CD8-positive, alpha-beta memory T cell (primary cell): ENCODE measurements at regions of chr9 and their contacts with region 1.

Region 1: DNA sequence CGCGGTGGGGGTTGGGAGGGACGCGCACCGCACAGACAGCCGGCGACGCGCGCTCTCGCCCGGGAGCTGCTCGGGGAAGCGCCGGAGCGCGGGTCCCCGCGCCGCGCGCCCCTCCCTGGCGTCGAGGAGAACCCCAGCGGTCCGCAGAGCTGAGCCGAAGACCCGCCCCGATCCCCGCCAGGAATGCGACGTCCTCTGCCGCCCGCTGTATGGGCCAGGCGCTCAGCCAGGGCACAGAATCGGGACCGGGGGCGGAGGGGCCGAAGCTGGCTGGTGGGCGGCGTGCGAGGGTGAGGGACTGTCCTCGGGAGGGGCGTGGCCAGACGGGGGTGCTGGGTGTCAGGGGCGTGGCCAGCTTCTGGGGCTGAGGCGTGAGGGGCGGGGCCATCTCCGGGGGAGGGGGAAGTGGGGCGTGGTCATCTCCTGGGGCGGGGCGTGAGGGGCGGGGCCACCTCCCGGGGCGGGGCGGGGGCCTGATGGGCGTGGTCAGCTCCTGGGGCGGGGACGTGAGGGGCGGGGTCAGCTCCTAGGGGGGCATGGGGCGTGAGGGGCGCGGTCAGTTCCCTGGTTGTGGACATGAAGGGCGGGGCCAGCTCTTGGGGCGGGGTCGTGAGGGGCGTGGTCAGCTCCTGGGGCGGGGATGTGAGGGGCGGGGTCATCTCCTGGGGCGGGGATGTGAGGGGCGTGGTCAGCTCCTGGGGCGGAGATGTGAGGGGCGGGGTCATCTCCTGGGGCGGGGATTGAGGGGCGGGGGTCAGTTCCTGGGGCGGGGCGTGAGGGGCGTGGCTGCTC is 965 bp downstream of the PTGDS start:
- DNase-seq: peak; percentile 68 to 85 (median 79)
- H3K4me3 ChIP-seq: no peak overlapping the region
- H3K4me3 Mint-ChIP-seq: peak overlapping the region in 4 of 7 donors; percentile 52 to 66 (median 61)
- H3K27ac ChIP-seq: no peak overlapping the region
- H3K27ac Mint-ChIP-seq: no peak overlapping the region
- H3K4me1 ChIP-seq: peaks cover 26% of the 10 kb centered on the region
- H3K4me1 Mint-ChIP-seq: peaks cover 21 to 47% (median 24%) of the 10 kb centered on the region in 3 donors
- H3K27me3 ChIP-seq: no peaks in the 10 kb centered on the region
- H3K27me3 Mint-ChIP-seq: peaks cover 0 to 5% of the 10 kb centered on the region in 2 donors

Region 2: DNA sequence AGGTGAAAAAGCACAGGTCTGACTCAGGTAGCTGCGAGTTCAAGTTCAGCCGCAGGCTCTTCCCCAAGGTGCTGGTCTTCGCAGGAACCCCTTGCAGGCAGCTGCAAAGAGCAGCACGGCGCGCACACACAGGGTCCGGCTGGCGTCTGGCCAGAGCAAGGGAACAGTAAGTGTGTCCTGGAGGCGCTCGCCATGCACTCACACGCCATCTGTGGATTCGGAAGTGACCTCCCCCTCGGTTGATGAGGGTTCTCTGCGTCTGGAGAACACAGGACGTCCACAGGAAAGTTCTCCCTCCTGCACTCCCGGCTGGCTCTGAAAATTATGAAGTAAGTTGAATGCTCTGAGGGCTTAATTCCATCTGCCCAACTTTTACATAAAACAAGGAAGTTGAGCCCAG is 329.5 kb before region 1 on chr9:
- CTCF ChIA-PET with region 1: no interaction called
- POLR2A ChIA-PET with region 1: no interaction called
- DNase-seq: no peak
- H3K4me3 ChIP-seq: no peak overlapping the region
- H3K4me3 Mint-ChIP-seq: no peak overlapping the region
- H3K27ac ChIP-seq: no peak overlapping the region
- H3K27ac Mint-ChIP-seq: no peak overlapping the region
- H3K4me1 ChIP-seq: peaks cover 8% of the 10 kb centered on the region
- H3K4me1 Mint-ChIP-seq: no peaks in the 10 kb centered on the region
- H3K27me3 ChIP-seq: peaks cover 18% of the 10 kb centered on the region
- H3K27me3 Mint-ChIP-seq: peaks cover 18 to 28% of the 10 kb centered on the region in 2 donors

Region 3: GRCh38 chr9:136949817-136950655 is 28.2 kb before region 1 on chr9:
- CTCF ChIA-PET with region 1: interaction called, 30 read pairs
- POLR2A ChIA-PET with region 1: interaction called, 3 read pairs
- DNase-seq: peak; percentile 93 to 98 (median 97)
- H3K4me3 ChIP-seq: peak overlapping the region; percentile 77
- H3K4me3 Mint-ChIP-seq: peak overlapping the region; percentile 81 to 92 (median 87)
- H3K27ac ChIP-seq: peak overlapping the region; percentile 78
- H3K27ac Mint-ChIP-seq: peak overlapping the region; percentile 80 to 94 (median 86)
- H3K4me1 ChIP-seq: peaks cover 14% of the 10 kb centered on the region
- H3K4me1 Mint-ChIP-seq: peaks cover 0 to 34% (median 7%) of the 10 kb centered on the region in 3 donors
- H3K27me3 ChIP-seq: no peaks in the 10 kb centered on the region
- H3K27me3 Mint-ChIP-seq: no peaks in the 10 kb centered on the region

Region 4: DNA sequence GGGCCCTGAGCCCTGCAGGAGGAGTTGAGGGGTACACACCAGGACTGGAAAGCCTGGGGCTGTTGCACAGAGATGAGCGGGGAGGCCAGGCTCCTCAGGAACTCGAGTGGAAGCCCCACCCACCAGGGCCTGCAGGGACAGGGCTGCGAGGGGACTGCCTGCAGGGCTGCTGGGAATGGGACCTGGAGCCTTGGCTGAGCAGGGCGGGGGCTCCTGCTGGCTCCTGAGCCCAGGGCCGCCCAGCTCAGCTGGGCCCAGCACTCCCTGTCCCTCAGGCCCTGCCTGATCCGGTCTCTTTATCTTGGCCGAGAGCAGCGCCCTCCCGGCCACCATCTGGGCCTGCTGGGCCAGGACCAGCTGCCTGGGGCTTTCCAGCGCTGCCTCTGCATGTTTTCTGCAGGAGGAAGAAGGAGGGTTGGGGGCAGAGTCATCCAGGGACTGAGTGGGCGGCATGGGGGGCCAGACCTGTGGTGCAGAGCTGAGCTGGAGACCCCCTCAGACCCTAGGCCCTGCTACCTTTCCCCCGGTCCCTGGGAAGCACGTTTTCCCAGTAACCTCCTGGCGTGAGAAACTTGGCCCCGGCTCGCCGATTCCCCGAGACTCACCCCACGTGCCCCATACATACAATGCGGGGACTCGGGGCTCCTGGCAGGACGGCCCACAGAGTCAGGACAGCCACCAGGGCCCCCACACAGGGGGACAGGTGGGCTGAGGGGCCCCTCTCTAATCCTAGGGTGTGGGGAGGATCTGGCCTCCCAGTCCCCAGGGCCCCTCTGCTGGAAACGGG is 16.8 kb before region 1 on chr9:
- CTCF ChIA-PET with region 1: interaction called, 13 read pairs
- POLR2A ChIA-PET with region 1: interaction called, 8 read pairs
- DNase-seq: no peak
- H3K4me3 ChIP-seq: no peak overlapping the region
- H3K4me3 Mint-ChIP-seq: peak overlapping the region in 3 of 7 donors; percentile 72 to 86 (median 78)
- H3K27ac ChIP-seq: no peak overlapping the region
- H3K27ac Mint-ChIP-seq: peak overlapping the region in 5 of 8 donors; percentile 29 to 93 (median 69)
- H3K4me1 ChIP-seq: peaks cover 52% of the 10 kb centered on the region
- H3K4me1 Mint-ChIP-seq: peaks cover 44 to 86% (median 48%) of the 10 kb centered on the region in 3 donors
- H3K27me3 ChIP-seq: no peaks in the 10 kb centered on the region
- H3K27me3 Mint-ChIP-seq: peaks cover 0 to 3% of the 10 kb centered on the region in 2 donors

Region 5: GRCh38 chr9:136991993-136992818 is 13.9 kb after region 1 on chr9 and contains the start of gene PAXX:
- CTCF ChIA-PET with region 1: interaction called, 21 read pairs
- POLR2A ChIA-PET with region 1: interaction called, 12 read pairs
- DNase-seq: peak; percentile 91 to 95 (median 92)
- H3K4me3 ChIP-seq: peak within 1 kb of the TSS; percentile 65
- H3K4me3 Mint-ChIP-seq: peak within 1 kb of the TSS; percentile 84 to 95 (median 87)
- H3K27ac ChIP-seq: peak within 1 kb of the TSS; percentile 83
- H3K27ac Mint-ChIP-seq: peak within 1 kb of the TSS; percentile 92 to 98 (median 96)
- H3K4me1 ChIP-seq: peaks cover 28% of the 10 kb centered on the region
- H3K4me1 Mint-ChIP-seq: peaks cover 19 to 50% (median 22%) of the 10 kb centered on the region in 3 donors
- H3K27me3 ChIP-seq: no peaks in the 10 kb centered on the region
- H3K27me3 Mint-ChIP-seq: peaks cover 2 to 3% of the 10 kb centered on the region in 2 donors
- total RNA-seq, gene PAXX: 78.4 to 82.2 TPM

Region 6: DNA sequence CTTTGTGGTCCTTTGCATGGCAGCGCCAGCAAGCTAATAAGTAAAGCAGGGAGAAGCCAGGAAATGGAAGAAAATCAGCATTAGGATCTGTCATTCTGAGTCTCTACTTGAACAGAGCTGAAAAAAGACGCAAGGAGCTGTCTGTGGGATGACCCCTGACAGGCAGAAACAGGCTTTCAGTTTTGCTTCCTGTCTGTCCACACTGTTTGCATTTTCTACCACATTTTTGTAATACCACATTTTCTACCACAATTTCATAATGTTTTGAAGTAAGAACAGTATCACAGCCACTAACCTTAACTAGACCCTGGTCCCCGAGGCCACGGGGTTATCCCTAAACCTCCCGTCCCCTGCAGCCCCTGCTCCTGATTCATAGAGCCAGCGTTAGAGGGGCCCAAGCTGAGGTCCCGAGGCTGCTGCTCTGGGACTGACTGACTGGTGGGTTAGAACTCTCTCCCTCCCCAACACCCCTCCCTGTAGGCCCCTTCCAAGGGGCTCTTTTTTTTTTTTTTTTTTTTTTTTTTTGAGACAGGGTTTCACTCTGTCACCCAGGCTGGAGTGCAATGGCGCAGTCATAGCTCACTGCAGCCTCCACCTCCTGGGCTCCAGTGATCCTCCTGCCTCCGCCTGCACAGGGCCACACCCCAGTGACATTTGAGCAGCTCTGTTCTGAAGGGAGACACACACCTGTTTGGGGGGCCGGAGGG is 22.1 kb after region 1 on chr9:
- CTCF ChIA-PET with region 1: interaction called, 8 read pairs
- POLR2A ChIA-PET with region 1: interaction called, 11 read pairs
- DNase-seq: peak in 2 of 5 donors; percentile 29 to 61
- H3K4me3 ChIP-seq: no peak overlapping the region
- H3K4me3 Mint-ChIP-seq: peak overlapping the region; percentile 62 to 93 (median 79)
- H3K27ac ChIP-seq: peak overlapping the region; percentile 43
- H3K27ac Mint-ChIP-seq: peak overlapping the region; percentile 84 to 96 (median 91)
- H3K4me1 ChIP-seq: peaks cover 46% of the 10 kb centered on the region
- H3K4me1 Mint-ChIP-seq: peaks cover 38 to 60% (median 40%) of the 10 kb centered on the region in 3 donors
- H3K27me3 ChIP-seq: no peaks in the 10 kb centered on the region
- H3K27me3 Mint-ChIP-seq: no peaks in the 10 kb centered on the region

Region 7: DNA sequence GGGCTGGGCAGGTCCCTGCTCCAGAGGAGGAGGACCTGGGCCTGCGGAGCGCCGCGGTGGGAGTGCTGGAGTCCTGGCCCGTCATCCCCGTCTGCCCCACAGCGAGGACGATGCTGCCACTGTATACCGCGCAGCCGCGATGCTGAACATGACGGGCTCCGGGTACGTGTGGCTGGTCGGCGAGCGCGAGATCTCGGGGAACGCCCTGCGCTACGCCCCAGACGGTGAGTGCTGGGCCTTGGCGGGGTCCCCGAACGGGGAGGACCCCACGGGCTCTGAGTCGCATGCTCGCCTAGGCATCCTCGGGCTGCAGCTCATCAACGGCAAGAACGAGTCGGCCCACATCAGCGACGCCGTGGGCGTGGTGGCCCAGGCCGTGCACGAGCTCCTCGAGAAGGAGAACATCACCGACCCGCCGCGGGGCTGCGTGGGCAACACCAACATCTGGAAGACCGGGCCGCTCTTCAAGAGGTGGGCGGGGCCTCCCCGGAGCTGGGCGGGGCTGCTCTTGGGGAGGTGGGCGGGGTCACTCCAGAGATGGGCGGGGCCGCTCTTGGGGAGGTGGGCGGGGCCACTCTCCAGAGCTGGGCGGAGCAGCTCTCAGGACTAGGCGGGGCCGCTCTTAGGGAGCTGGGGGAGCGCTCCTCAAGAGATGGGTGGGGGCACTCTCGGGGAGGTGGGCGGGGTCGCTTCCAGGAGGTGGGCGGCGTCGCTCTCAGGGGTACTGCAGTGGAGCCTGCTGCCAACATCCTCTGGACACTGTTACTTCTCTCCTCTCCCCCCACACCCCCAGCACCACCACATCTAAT is 178.5 kb after region 1 on chr9:
- CTCF ChIA-PET with region 1: no interaction called
- POLR2A ChIA-PET with region 1: no interaction called
- DNase-seq: peak; percentile 41 to 66 (median 48)
- H3K4me3 ChIP-seq: peak overlapping the region; percentile 41
- H3K4me3 Mint-ChIP-seq: peak overlapping the region in 6 of 7 donors; percentile 23 to 69 (median 59)
- H3K27ac ChIP-seq: no peak overlapping the region
- H3K27ac Mint-ChIP-seq: no peak overlapping the region
- H3K4me1 ChIP-seq: peaks cover 13% of the 10 kb centered on the region
- H3K4me1 Mint-ChIP-seq: peaks cover 0 to 28% (median 15%) of the 10 kb centered on the region in 3 donors
- H3K27me3 ChIP-seq: peaks cover 19% of the 10 kb centered on the region
- H3K27me3 Mint-ChIP-seq: peaks cover 26 to 38% of the 10 kb centered on the region in 2 donors